ENCODE measurements at regions of chr3 and their contacts with region 1.

Region 1: DNA sequence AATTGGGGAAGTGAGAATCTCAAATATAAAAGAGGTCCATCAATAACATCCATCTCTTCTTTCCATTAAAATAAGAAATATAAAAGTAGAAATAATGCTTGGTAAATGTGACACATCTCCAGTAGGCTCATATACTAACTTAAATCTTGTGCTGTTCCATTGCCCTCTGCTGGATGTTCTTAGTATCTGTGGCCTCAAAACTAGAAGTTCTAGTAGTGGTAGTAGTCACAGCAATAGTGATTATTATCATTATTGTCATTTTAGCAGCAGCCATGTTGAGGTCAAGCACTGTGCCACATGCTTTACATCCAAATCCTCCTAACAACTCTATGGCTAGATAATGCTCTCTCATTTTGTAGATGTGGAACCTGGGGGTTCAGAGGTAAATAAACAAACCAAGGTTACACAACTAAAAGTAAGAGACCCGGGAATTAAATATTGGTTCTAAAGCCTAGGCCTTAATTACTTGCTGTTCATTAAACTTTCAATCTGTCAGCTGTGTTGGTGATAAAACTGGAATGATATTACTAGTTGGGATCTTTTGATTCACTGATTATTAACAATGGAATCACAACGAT is 20.2 kb upstream of the BTLA start:
- DNase-seq: no peak

Region 2: GRCh38 chr3:112111785-112112402 is 407.6 kb before region 1 on chr3:
- intact Hi-C with region 1: loop called (anchors 5 kb)
- DNase-seq: no peak

Region 3: GRCh38 chr3:112293368-112294321 is 225.9 kb before region 1 on chr3 and contains the start of gene SLC9C1:
- intact Hi-C with region 1: loop called (anchors 5 kb)
- DNase-seq: no peak
- total RNA-seq, gene SLC9C1: 3.9 TPM

Region 4: GRCh38 chr3:112319516-112320276 is 199.8 kb before region 1 on chr3:
- intact Hi-C with region 1: no loop called
- DNase-seq: no peak

Region 5: GRCh38 chr3:112333002-112333380 is 186.5 kb before region 1 on chr3 and contains the start of gene CD200:
- intact Hi-C with region 1: loop called (anchors 5 kb)
- DNase-seq: peak; percentile 80
- total RNA-seq, gene CD200: 1.4 TPM

Region 6: DNA sequence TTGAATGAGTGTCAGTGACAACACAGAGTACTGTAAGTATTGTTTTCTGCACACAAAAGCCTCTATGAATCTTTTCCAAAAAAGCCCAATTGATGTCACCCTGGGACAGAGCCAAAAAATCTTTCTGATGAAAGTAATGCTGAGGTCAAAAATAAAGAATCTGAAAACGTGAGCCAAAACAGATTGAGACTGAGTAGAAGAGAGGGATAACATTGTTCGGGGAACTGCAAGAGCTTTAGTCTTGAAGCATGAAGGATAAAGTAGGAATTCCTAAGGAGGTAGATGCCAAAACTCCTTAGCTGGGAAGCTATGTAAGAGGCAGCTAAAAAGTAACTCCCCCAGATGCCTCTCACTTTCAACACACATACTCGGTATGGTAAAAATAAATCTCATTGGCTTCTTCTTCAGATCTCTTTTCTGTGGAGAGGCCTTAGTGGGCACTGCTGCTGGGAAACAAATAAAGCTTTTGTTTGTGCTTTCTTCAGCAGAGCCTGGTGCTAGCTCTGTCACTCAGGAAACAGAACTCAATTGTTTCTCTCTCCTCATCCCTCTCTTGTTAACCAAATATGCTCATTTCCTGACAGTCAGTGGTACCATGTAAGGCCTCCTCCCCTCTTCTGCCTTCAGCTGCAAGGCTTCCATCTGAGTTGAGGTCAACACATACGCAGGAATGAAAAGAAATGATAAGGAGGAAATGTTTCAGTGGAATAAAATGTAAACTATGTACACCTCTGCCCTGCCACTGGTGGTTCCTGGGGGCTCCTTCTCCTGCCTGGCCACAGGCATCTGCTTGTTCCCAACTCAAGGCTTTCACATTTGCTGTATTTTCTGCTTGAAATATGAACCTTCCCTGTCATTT is 128.5 kb before region 1 on chr3:
- intact Hi-C with region 1: loop called (anchors 10 kb)
- DNase-seq: no peak